GM12878 (cell line): ENCODE measurements at regions of chr18 and their contacts with region 1.

Region 1: DNA sequence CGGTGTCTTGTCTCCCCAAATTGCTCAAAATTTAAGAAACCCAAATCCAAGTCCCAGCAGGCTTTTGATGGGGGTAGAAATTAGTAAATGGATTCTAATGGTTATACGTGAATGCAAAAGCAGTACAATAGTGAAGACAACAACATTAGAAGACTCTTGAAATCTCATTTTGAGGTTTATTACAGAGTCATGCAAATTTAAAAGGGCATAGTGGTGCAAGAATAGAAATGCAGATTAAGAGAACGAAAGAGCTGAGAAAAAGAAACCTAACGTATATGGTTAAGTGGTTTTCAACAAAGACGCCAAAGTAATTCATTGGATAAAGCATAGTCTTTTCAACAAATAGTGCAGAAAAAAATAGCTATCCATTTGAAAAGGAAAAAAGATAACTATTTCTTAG is 33.2 kb upstream of the CXXC1 start:
- DNase-seq: peak; percentile 58
- ATAC-seq: peak; percentile 86
- H3K4me3 ChIP-seq: no peak overlapping the region
- H3K27ac ChIP-seq: peak overlapping the region; percentile 78
- H3K4me1 ChIP-seq: peaks cover 27% of the 10 kb centered on the region
- H3K27me3 ChIP-seq: no peaks in the 10 kb centered on the region
- CTCF ChIP-seq: no peak
- EP300 ChIP-seq: peak in 1 of 2 experiments; percentile 61; a peak in 1 of 4 replicates
- POLR2A ChIP-seq: no peak
- RAD21 ChIP-seq: no peak

Region 2: DNA sequence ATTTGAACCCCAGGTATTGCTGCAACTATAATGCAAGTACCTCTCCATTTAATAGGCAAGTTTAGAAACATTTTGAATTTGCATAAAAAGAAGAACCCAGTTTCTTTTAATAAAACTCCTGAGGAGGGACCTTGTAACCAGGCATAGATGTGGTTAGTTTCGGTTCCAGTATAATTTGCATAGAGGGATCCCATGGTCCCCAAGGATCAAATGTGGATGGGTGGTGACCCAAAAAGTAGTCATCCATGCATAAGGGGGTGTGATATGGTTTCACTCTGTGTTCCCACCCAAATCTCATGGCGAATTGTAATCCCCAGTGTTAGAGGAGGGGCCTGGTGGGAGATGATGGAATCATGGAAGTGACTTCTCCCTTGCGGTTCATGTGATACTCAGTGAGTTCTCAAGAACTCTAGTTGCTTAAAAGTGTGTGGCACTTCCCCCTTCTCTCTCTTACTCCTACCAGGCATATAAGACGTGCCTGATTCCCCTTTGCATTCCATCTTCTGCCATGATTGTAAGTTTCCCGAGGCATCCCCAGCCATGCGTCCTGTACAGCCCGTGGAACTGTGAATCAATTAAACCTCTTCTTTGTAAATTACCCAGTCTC is 13.9 kb after region 1 on chr18:
- CTCF ChIA-PET with region 1: interaction called, 13 read pairs
- POLR2A ChIA-PET with region 1: interaction called, 5 read pairs
- RAD21 ChIA-PET with region 1: interaction called, 20 read pairs
- SMC1A ChIA-PET with region 1: interaction called, 25 read pairs
- in situ Hi-C with region 1: no loop called
- intact Hi-C with region 1: no loop called
- DNase-seq: peak; percentile 71
- ATAC-seq: peak; percentile 78
- H3K4me3 ChIP-seq: peak overlapping the region; percentile 2; the same call in 1 of the 2 replicates
- H3K27ac ChIP-seq: peak overlapping the region; percentile 31
- H3K4me1 ChIP-seq: peaks cover 49% of the 10 kb centered on the region
- H3K27me3 ChIP-seq: no peaks in the 10 kb centered on the region
- CTCF ChIP-seq: no peak
- EP300 ChIP-seq: peak; percentile 43 to 66; a peak in 3 of 4 replicates
- POLR2A ChIP-seq: no peak
- RAD21 ChIP-seq: no peak

Region 3: DNA sequence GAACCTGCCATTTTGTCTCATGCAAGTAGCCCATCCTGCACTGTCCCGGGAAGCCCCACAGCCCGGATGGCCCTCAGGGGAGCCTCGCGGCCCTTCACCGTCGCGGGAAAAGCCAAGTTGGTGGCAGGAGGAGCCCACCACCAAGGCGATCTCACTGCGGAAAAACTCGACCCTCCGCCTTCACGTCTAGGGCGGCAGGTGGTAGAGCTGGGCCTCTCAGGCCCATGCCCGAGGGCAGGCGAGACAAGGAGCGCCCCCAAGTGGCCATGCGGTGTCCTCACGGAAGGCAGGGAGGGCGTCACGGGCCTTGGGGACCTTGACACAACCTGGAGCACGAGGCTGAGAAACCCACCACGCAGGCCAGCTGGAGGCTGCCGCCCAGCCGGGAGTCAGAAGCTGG is 19.4 kb after region 1 on chr18:
- CTCF ChIA-PET with region 1: interaction called, 6 read pairs
- POLR2A ChIA-PET with region 1: interaction called, 3 read pairs
- RAD21 ChIA-PET with region 1: interaction called, 20 read pairs
- SMC1A ChIA-PET with region 1: interaction called, 25 read pairs
- in situ Hi-C with region 1: no loop called
- intact Hi-C with region 1: no loop called
- DNase-seq: no peak
- ATAC-seq: no peak
- H3K4me3 ChIP-seq: no peak overlapping the region
- H3K27ac ChIP-seq: no peak overlapping the region
- H3K4me1 ChIP-seq: peaks cover 22% of the 10 kb centered on the region
- H3K27me3 ChIP-seq: no peaks in the 10 kb centered on the region
- CTCF ChIP-seq: peak in 2 of 3 experiments; percentile 21 to 28; a peak in 2 of 6 replicates
- EP300 ChIP-seq: no peak
- POLR2A ChIP-seq: no peak
- RAD21 ChIP-seq: no peak